HepG2 (cell line): ENCODE measurements at regions of chr15 and their contacts with region 1.

Region 1: GRCh38 chr15:50354838-50355618 is at the start of gene GABPB1:
- DNase-seq: peak; percentile 87
- ATAC-seq: peak; percentile 87
- H3K4me3 ChIP-seq: peak within 1 kb of the TSS; percentile 80 to 96 (median 93)
- H3K27ac ChIP-seq: peak within 1 kb of the TSS; percentile 100
- H3K4me1 ChIP-seq: peaks cover 58% of the 10 kb centered on the region
- H3K27me3 ChIP-seq: no peaks in the 10 kb centered on the region; a peak in 1 of 5 replicates
- CTCF ChIP-seq: no peak
- EP300 ChIP-seq: no peak; a peak in 1 of 4 replicates
- POLR2A ChIP-seq: peak; percentile 82 to 87
- RAD21 ChIP-seq: peak; percentile 6; the same call in 1 of the 2 replicates
- total RNA-seq, gene GABPB1: 39.5 and 50.8 TPM in 2 replicates

Region 2: DNA sequence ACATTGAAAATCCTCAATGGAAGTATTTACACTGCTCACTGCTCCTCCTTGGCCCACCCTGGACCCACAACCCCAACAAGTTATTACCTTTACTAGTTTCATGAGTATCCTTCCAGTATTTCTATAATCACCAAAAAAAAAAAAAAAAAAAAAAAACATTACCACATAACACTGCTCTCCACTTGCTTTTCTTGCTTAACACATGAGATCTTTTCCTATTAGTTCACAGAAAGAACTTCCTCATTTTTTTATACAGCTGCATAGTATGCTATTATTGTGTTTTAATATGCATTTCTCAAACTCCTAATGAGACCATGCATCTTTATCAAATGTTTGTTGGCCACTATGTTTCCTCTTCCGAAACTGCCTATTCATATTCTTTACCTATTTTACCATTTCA is 14.6 kb before region 1 on chr15:
- CTCF ChIA-PET with region 1: no interaction called
- POLR2A ChIA-PET with region 1: interaction called, 74 read pairs
- in situ Hi-C with region 1: no loop called
- intact Hi-C with region 1: loop called (anchors 1 kb)
- DNase-seq: no peak
- ATAC-seq: no peak
- H3K4me3 ChIP-seq: no peak overlapping the region
- H3K27ac ChIP-seq: no peak overlapping the region
- H3K4me1 ChIP-seq: peaks cover 28% of the 10 kb centered on the region
- H3K27me3 ChIP-seq: no peaks in the 10 kb centered on the region
- CTCF ChIP-seq: no peak
- EP300 ChIP-seq: no peak
- POLR2A ChIP-seq: no peak
- RAD21 ChIP-seq: no peak

Region 3: DNA sequence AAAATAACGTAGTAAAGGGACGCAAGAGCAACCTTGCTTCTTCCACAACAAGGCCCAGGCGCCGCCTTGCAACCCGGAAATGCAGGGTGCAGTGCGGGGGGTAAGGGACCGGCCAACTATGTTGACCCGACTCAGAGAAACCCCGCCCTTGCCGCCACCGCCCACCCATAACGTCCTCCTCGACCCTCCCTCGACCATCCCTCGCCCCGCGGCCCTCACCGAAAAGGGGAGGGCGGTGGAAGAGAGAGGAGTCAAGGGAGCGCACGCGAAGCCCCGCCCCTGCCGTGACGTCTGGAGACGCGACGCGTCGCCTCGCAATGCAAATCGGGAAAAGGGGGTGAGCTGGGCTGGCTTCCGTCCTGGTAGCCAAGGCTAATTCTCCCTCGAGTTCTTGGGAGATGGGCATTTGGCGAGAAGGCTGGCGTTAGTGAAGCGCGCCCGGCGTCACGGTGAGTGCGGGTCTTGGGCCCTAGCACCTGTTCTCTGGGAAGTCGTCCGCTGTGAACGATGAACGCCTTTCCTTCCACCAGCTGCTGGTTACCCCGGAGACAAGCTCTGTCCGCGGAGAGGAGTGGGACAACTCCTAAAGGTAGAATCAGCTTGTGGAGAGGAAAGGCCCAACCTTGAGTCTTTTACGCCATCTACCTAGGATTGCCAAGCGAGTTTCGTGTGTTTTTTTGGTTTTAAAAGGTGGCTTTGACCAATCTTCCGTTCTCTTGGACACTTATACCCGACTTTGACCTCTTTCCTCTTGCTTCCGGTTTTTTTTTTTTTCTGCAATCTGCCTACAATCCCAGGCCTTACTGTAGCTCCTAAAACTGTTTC is 69.2 kb after region 1 on chr15 and contains the start of gene USP8:
- CTCF ChIA-PET with region 1: no interaction called
- POLR2A ChIA-PET with region 1: interaction called, 62 read pairs
- in situ Hi-C with region 1: no loop called
- intact Hi-C with region 1: loop called (anchors 1 kb)
- DNase-seq: peak; percentile 97
- ATAC-seq: peak; percentile 96
- H3K4me3 ChIP-seq: peak within 1 kb of the TSS; percentile 68 to 86 (median 80)
- H3K27ac ChIP-seq: peak within 1 kb of the TSS; percentile 89
- H3K4me1 ChIP-seq: peaks cover 50% of the 10 kb centered on the region
- H3K27me3 ChIP-seq: no peaks in the 10 kb centered on the region; a peak in 1 of 5 replicates
- CTCF ChIP-seq: no peak
- EP300 ChIP-seq: no peak
- POLR2A ChIP-seq: peak; percentile 94 to 98
- RAD21 ChIP-seq: no peak
- total RNA-seq, gene USP8: 50.7 and 81.7 TPM in 2 replicates